Posterior vena cava (tissue), 2 donors: ENCODE measurements at regions of chr1 and their contacts with region 1.

Region 1: DNA sequence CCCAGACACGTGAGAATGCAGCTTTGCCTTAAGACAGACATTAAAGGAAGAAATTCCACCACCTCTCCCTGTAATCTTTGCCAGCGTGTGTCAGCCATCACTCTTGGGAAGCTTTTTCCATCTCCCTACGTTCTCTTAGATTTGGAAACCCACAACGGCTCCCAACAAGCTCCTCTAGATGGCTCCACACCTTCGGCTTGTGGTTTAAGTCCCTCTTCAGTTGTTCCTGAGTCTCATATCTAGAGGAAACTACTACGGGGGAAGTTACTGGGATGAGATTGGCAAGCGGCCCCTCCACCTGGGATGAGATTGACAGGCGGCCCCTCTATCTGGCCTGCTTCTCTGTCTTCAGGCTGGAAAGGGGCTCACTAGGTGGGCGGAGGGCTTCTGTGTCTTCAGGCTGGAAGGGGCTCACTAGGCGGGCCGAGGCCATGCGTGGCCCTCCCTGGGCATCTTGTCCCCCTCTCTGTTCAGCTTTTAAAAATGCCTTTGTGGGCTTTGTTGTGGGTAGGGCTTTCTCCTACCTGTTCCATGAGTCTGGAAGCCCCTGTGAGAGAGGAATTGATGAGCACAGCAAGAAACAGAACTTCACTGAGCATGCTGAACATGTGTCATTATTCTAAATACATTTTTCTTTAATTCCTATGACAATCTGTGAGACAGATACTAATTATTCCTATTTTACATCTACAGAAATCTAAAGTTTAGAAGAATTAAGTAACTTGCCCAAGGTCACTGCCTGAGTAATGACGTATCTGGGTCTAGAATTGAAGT is 670.5 kb downstream of the KIF26B start:
- DNase-seq: peak; percentile 60

Region 2: GRCh38 chr1:246261639-246262038 is 436.3 kb after region 1 on chr1:
- intact Hi-C with region 1: loop called in 1 of 2 experiments (anchors 5 kb)
- DNase-seq: no peak